Tibial artery (tissue), 4 donors: ENCODE measurements at regions of chr6 and their contacts with region 1.

Region 1: GRCh38 chr6:28940858-28941680 is 17.3 kb upstream of the TRIM27 start:
- DNase-seq: peak; percentile 83 to 85
- H3K4me3 ChIP-seq: peak overlapping the region; percentile 61 to 75
- H3K27ac ChIP-seq: peak overlapping the region; percentile 82 to 85
- H3K4me1 ChIP-seq: peaks cover 0 to 28% (median 11%) of the 10 kb centered on the region in 4 donors
- H3K27me3 ChIP-seq: no peaks in the 10 kb centered on the region
- CTCF ChIP-seq: no peak

Region 2: DNA sequence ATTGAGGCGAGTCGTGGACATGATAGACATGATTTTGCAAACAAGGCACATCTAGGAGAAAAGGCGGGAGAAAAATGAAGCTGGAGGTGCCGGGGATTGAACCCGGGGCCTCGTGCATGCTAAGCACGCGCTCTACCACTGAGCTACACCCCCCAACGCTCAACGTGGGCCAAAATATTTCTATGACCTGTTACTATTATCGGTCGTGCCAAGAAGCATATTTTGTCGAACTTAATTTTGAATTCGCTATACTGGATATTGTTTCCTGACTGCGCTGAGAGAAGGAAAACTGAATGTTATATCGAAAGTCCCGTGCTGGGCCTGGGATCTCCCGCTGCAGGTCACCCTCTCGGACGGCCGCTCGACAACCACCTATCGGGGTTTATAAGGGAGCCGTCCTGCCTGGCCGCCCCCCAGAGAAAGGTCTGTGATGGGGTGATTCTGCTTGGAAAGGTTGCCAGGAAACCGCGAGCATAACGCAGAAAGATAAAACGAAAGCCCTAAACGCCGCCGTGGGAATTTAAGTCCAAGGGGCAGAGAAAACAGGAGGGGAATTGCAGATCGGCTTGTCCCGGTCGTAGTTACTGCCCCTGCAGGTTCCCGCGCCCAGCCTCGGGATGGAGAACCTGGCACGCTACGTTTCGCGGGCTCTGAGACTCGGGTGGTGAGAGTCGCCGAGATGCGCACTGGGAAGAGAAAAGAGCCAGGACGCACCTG is 77.3 kb before region 1 on chr6:
- intact Hi-C with region 1: loop called (anchors 5 kb)
- DNase-seq: peak; percentile 66 to 76
- H3K4me3 ChIP-seq: peak overlapping the region; percentile 63 to 76
- H3K27ac ChIP-seq: peak overlapping the region; percentile 65 to 75
- H3K4me1 ChIP-seq: peaks cover 0 to 17% (median 8%) of the 10 kb centered on the region in 4 donors
- H3K27me3 ChIP-seq: no peaks in the 10 kb centered on the region
- CTCF ChIP-seq: no peak

Region 3: DNA sequence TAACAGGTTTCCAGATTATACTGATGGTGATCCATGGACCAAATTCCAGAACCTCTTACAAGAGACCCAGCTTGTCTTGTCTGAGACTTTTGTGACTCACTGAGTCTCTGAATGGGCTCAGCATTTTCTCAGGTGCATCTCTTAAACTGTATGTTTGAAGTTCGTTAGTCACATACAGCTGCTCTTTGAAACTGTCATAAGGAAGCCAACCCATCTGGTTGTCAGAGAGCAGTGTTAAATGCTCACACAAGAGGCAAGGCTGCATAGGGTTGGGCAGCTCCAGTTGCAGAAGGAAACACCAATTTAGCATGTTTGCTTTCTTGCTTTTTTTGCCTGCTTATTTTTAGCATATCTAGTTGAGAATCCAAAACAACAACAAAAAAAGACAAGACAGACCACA is 64.4 kb before region 1 on chr6:
- intact Hi-C with region 1: no loop called
- DNase-seq: no peak
- H3K4me3 ChIP-seq: no peak overlapping the region
- H3K27ac ChIP-seq: no peak overlapping the region
- H3K4me1 ChIP-seq: peaks cover 0 to 9% (median 0%) of the 10 kb centered on the region in 4 donors
- H3K27me3 ChIP-seq: peaks cover 0 to 18% of the 10 kb centered on the region in 2 donors
- CTCF ChIP-seq: no peak

Region 4: DNA sequence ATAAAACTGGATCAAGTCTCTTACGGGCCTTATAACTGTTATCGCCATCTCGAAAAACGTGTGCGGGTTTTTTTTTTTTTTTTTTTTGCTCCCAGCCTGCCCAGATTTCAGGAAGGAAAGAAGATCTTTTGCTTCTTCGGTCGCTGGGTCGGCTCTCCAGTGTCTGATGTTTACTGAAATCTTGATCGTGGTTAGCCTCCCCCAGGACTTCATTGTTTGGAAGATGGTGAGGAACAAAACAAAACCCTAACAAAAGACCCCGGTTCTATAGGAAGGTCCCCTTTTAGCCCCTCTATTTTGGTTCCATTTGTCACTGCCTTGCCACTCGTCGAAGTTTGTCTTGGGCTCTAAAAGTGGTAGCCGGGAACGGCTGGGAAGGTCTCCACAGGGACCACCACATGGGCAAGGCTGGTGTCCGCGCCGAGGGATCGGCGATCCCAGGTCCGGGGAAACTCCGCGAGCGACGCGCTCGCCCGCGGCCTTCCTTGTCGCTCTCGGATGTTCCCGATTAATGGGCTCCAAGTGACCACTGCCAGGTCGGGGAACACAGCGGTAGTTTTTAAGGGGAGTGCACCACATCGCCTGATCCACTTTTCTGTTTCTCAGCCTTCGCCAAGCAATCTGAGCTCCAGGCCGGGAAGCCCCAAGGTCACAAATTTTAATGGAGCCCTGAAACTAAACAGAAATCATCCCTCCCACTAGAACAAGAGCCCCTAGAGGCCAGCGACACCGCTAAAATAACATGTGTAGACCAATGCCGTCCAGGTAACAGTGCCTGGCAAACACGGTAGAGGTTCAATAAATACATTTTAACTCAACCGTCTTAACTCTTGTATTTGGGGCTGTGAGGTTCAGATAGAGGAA is 44.3 kb before region 1 on chr6:
- intact Hi-C with region 1: loop called (anchors 2 kb)
- DNase-seq: peak; percentile 60 to 79
- H3K4me3 ChIP-seq: peak overlapping the region; percentile 59 to 81
- H3K27ac ChIP-seq: peak overlapping the region; percentile 93 to 99
- H3K4me1 ChIP-seq: peaks cover 0 to 15% (median 5%) of the 10 kb centered on the region in 4 donors
- H3K27me3 ChIP-seq: no peaks in the 10 kb centered on the region
- CTCF ChIP-seq: peak; percentile 18 to 29

Region 5: DNA sequence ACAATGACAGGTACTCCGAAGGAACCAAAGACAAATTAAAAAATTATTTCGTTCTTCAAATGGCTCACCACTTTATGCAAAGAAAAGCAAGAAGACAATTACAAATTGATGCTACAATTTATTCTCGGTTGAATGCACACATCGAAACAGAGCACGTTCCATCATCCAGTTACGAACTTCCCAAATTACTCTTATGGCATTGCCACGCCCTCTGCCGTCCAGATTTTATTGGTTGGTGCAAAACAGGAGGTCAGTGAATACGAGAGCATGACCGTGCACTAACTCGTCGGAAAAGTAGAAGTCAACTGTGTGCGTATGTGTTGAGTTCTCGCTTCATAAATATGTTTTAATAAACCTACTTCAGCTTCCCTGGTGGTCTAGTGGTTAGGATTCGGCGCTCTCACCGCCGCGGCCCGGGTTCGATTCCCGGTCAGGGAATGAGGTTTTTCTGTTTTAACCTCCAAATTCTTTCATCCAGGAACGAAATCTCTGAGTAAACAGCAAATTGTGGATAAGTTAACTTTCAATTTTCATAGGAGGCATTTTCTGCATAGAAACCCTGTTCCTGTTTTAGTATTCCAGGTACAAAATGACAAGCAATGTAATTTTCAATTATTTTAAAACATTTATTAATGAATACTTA is 40.9 kb after region 1 on chr6:
- intact Hi-C with region 1: loop called (anchors 5 kb)
- DNase-seq: peak; percentile 92
- H3K4me3 ChIP-seq: peak overlapping the region; percentile 54 to 68
- H3K27ac ChIP-seq: peak overlapping the region; percentile 71 to 75
- H3K4me1 ChIP-seq: peaks cover 0 to 10% (median 0%) of the 10 kb centered on the region in 4 donors
- H3K27me3 ChIP-seq: peaks cover 0 to 6% of the 10 kb centered on the region in 2 donors
- CTCF ChIP-seq: peak in 1 of 2 experiments; percentile 9